A549 (cell line): ENCODE measurements at regions of chr7 and their contacts with region 1.

Region 1: GRCh38 chr7:23273141-23273599 is 26.0 kb upstream of the MALSU1 start:
- DNase-seq: peak; percentile 83 to 97
- ATAC-seq: peak; percentile 97
- H3K4me3 ChIP-seq: peak overlapping the region; percentile 23; the same call in 1 of the 3 replicates
- H3K27ac ChIP-seq: peak overlapping the region; percentile 76
- H3K4me1 ChIP-seq: peaks cover 22% of the 10 kb centered on the region
- CTCF ChIP-seq: peak; percentile 95
- EP300 ChIP-seq: no peak
- POLR2A ChIP-seq: no peak
- RAD21 ChIP-seq: peak; percentile 89 to 93

Region 2: DNA sequence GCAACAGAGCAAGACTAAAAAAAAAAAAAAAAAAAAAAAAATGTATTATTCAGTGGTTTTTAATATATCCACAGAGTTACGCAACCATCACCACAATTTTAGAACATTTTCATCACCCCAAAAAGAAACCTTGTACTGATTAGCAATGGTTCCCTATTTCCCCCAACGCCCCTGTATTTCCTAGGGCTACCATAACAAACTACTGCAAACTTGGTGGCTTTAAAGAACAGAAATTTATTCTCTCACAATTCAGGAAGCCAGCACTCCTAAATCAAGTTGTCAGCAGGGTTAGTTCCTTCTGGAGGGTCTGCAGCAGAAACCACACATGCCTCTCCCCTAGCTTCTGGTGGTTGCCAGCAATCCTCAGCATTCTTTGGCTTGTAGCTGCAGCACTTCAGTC is 97.2 kb before region 1 on chr7:
- CTCF ChIA-PET with region 1: no interaction called
- POLR2A ChIA-PET with region 1: no interaction called
- DNase-seq: no peak
- ATAC-seq: no peak
- H3K4me3 ChIP-seq: no peak overlapping the region
- H3K27ac ChIP-seq: no peak overlapping the region
- H3K4me1 ChIP-seq: peaks cover under 1% of the 10 kb centered on the region; the same call in 1 of the 3 replicates
- CTCF ChIP-seq: no peak
- EP300 ChIP-seq: no peak
- POLR2A ChIP-seq: no peak
- RAD21 ChIP-seq: no peak

Region 3: GRCh38 chr7:23298885-23299769 is 26.0 kb after region 1 on chr7 and contains the start of gene MALSU1:
- CTCF ChIA-PET with region 1: interaction called, 49 read pairs
- POLR2A ChIA-PET with region 1: interaction called, 8 read pairs
- DNase-seq: peak; percentile 92 to 97
- ATAC-seq: peak; percentile 95 to 96
- H3K4me3 ChIP-seq: peak within 1 kb of the TSS; percentile 79
- H3K27ac ChIP-seq: peak within 1 kb of the TSS; percentile 87 to 96
- H3K4me1 ChIP-seq: peaks cover 36% of the 10 kb centered on the region
- CTCF ChIP-seq: no peak
- EP300 ChIP-seq: no peak
- POLR2A ChIP-seq: peak; percentile 96
- RAD21 ChIP-seq: no peak
- polyA plus RNA-seq, gene MALSU1: 93.6 and 122 TPM in 2 replicates

Region 4: DNA sequence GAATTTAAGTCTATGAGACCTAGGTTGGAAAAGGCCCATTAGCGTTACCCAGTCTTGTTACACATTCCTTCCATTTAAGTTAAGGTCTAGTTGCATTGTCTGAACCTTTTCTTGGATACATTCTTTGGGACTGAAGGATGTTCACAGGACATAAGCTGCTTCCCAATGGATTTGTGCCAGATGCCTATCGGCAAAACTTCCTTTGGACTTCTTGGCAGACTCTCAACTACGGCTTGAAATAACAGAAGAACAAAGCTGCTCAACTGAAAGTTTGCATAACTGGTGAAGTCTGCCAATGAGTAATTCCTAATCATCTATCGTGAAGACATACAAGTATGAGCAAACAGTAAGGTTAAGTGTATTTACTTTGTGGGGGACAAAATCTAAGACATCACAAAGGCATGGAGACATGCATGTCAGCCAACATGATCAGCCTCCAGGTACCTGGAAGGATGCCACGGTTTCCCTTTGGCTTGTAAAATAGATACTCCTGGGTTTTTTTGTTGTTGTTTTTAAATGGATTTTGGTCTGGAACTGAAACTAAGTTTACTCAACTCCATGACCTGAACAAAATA is 61.4 kb after region 1 on chr7:
- CTCF ChIA-PET with region 1: interaction called, 21 read pairs
- POLR2A ChIA-PET with region 1: interaction called, 3 read pairs
- DNase-seq: peak; percentile 98
- ATAC-seq: peak; percentile 88 to 89
- H3K4me3 ChIP-seq: peak overlapping the region; percentile 26; the same call in 2 of the 3 replicates
- H3K27ac ChIP-seq: peak overlapping the region; percentile 75 to 91
- H3K4me1 ChIP-seq: peaks cover 47% of the 10 kb centered on the region
- CTCF ChIP-seq: no peak
- EP300 ChIP-seq: peak; percentile 96 to 98
- POLR2A ChIP-seq: no peak
- RAD21 ChIP-seq: peak; percentile 11 to 53; a peak in 4 of 5 replicates

Region 5: DNA sequence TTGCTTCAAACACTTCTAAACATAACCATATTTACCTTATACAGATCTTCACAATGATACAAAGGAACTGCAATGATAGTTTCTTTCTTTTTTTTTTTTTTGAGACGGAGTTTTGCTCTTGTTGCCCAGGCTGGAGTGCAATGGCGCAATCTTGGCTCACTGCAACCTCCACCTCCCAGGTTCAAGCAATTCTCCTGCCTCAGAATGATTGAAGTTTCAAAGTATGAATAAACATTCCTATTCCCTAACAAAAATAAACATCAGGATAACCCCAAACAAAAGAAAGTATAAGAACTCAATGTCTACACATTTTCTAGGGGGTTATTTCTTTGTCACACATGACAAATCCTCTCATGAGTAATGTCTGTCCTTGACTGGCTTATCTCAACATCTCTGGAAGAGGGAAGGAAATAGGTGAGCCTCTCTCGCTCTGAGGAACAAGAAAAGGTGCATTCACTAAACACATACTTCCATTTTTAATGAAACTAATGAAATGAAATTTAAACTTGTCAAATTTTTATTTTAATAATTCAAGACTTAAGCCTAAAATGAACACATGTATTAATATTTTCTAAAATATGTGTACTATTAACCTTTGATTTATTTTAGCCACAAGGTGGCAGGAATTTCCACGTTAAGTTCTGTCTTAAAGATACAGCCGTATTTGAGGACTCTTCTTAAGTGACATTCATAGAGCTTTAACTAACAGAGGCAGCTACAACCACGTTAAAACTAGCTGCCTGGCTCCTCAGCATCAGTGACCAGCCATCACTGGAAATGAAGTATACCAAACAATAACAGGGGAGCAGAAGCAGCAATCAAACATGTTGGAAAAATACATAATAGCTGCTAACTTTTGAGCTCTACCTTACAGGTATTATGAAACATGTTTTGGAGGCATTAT is 84.3 kb after region 1 on chr7:
- CTCF ChIA-PET with region 1: interaction called, 20 read pairs
- POLR2A ChIA-PET with region 1: interaction called, 4 read pairs
- DNase-seq: peak; percentile 86 to 87
- ATAC-seq: peak; percentile 91 to 96
- H3K4me3 ChIP-seq: no peak overlapping the region
- H3K27ac ChIP-seq: peak overlapping the region; percentile 62
- H3K4me1 ChIP-seq: peaks cover 37% of the 10 kb centered on the region
- CTCF ChIP-seq: peak; percentile 78
- EP300 ChIP-seq: peak; percentile 57 to 67; a peak in 3 of 5 replicates
- POLR2A ChIP-seq: no peak
- RAD21 ChIP-seq: peak; percentile 62 to 85

Region 6: DNA sequence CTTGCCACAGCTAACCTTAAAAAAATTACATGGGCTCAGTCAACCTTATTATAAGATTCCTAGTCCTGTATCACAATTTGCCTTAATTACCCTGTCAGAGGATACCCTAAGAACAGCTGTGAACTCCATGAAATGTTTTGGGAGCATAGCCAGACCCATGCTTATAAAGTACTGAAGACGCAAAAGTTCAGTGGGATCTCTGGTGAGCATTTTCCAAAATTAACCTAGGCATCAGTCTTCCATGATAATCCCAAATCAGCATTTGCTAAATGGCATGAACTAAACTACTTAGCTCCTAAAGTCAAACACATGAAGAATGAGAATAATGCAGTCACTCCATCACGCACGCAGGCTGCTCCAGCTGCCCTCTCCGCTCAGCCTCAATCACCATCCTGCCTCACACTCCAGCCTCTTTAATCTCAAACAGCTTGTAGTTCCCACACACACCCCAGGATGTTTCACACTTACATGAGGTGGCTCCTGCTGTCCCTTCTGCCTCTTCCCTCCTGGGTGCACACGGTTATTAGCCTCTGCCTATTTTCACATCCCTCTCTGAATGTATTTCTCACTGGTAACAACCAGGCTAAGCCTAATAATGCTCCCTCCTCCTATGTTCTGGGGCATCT is 181.8 kb after region 1 on chr7:
- CTCF ChIA-PET with region 1: interaction called, 10 read pairs
- POLR2A ChIA-PET with region 1: no interaction called
- DNase-seq: no peak
- ATAC-seq: peak in 1 of 2 experiments; percentile 33; a peak in 2 of 6 replicates
- H3K4me3 ChIP-seq: no peak overlapping the region
- H3K27ac ChIP-seq: no peak overlapping the region
- H3K4me1 ChIP-seq: peaks cover 4% of the 10 kb centered on the region; the same call in 2 of the 3 replicates
- CTCF ChIP-seq: no peak
- EP300 ChIP-seq: no peak
- POLR2A ChIP-seq: no peak
- RAD21 ChIP-seq: no peak

Region 7: GRCh38 chr7:23539494-23539907 is 266.3 kb after region 1 on chr7:
- CTCF ChIA-PET with region 1: interaction called, 67 read pairs
- POLR2A ChIA-PET with region 1: no interaction called
- DNase-seq: no peak
- ATAC-seq: no peak
- H3K4me3 ChIP-seq: no peak overlapping the region
- H3K27ac ChIP-seq: no peak overlapping the region
- H3K4me1 ChIP-seq: no peaks in the 10 kb centered on the region
- CTCF ChIP-seq: no peak
- EP300 ChIP-seq: no peak
- POLR2A ChIP-seq: no peak
- RAD21 ChIP-seq: no peak

Region 8: DNA sequence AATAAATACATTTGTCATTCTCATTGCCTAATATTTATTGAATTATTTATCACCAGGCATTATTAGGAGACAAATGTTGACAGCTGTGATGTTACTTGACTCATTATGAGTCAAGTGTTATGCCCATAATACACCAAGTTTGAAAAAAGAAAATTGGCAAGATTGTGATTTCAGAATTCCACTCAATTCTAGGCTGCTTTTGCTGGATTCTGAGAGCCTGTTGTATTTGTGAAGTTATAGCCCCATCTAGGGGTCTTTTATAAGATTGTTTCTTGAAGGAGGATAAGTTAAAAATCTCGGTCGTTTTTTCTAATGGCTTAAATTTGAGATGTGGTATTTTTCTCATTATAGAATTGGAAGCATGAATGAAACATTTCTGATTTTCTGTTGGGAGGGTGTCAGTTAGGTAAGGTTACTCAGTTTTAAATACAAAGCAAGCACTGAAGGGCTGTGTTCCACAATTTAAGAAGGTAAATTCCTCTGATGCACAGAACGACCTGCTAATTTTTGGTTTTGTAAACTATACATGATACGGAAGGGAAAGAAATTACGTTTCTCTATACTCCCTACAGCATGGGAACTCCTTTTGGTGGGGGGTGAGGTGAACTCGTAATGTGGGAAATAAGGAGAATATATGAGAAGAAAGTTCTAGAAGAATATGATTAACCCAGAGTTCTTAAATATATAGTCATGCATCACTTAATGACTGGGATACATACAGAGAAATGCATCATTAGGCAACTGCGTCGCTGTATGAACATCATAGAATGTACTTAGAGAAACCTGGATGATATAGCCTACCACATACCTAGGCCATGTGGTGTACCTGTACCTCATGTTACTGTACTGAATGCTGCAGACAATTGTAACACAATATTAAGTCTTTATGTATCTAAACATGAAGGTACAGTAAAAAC is 439.5 kb after region 1 on chr7:
- CTCF ChIA-PET with region 1: interaction called, 11 read pairs
- POLR2A ChIA-PET with region 1: no interaction called
- DNase-seq: peak; percentile 54 to 64
- ATAC-seq: peak; percentile 61 to 83; a peak in 3 of 6 replicates
- H3K4me3 ChIP-seq: no peak overlapping the region
- H3K27ac ChIP-seq: no peak overlapping the region
- H3K4me1 ChIP-seq: peaks cover 27% of the 10 kb centered on the region
- CTCF ChIP-seq: peak; percentile 96
- EP300 ChIP-seq: no peak
- POLR2A ChIP-seq: no peak
- RAD21 ChIP-seq: peak; percentile 90 to 95